Tibial artery (tissue), 4 donors: ENCODE measurements at regions of chr10 and their contacts with region 1.

Region 1: DNA sequence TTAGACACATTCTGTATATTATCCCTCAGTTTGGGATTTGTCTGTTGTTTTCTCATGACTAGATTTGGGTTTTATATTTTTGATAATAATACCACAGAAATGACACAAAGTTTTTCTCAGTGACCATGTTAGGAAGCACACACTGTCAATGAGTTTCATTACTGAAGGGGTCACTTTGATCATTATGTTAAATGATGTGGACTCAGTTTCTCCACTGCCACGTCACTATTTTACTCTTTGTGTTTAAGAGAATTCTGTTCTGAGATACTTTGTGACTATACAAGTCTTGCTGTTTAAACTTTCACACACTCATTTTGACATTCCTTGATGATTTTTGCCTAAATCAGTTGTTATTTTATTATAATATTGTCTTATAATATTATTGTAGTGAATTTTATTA is 400.9 kb upstream of the AKR1E2 start:
- DNase-seq: no peak
- H3K4me3 ChIP-seq: no peak overlapping the region
- H3K27ac ChIP-seq: no peak overlapping the region
- H3K4me1 ChIP-seq: peaks cover 0 to 10% (median 0%) of the 10 kb centered on the region in 4 donors
- H3K27me3 ChIP-seq: no peaks in the 10 kb centered on the region
- CTCF ChIP-seq: no peak

Region 2: GRCh38 chr10:3987143-3987974 is 437.7 kb before region 1 on chr10:
- intact Hi-C with region 1: no loop called
- DNase-seq: no peak
- H3K4me3 ChIP-seq: no peak overlapping the region
- H3K27ac ChIP-seq: no peak overlapping the region
- H3K4me1 ChIP-seq: no peaks in the 10 kb centered on the region
- H3K27me3 ChIP-seq: no peaks in the 10 kb centered on the region
- CTCF ChIP-seq: no peak

Region 3: GRCh38 chr10:4319870-4320367 is 105.2 kb before region 1 on chr10:
- intact Hi-C with region 1: no loop called
- DNase-seq: no peak
- H3K4me3 ChIP-seq: no peak overlapping the region
- H3K27ac ChIP-seq: no peak overlapping the region
- H3K4me1 ChIP-seq: peaks cover 0 to 27% (median 10%) of the 10 kb centered on the region in 4 donors
- H3K27me3 ChIP-seq: no peaks in the 10 kb centered on the region
- CTCF ChIP-seq: no peak

Region 4: DNA sequence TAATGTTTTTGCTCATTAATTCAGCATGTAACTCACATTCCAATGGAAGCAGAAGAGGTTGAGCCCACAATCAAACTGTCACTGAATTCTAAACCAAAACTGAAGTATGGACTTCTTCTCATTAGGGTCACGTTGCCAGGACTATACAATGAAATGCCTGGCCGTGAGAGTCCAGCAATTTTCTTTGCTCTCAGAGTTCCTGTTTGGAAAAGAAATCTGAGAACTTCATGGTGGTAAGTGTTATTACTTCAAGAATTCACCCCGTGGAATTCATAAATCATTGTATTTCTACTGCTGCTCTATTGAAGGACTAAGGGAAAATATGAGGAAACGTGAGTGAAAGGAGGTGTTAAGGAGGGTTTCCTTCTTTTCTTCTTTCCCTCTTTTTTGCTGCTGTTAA is 40.8 kb before region 1 on chr10:
- intact Hi-C with region 1: no loop called
- DNase-seq: no peak
- H3K4me3 ChIP-seq: peak overlapping the region; percentile 13 to 33
- H3K27ac ChIP-seq: peak overlapping the region; percentile 34 to 38
- H3K4me1 ChIP-seq: peaks cover 0 to 13% (median 0%) of the 10 kb centered on the region in 4 donors
- H3K27me3 ChIP-seq: no peaks in the 10 kb centered on the region
- CTCF ChIP-seq: no peak

Region 5: DNA sequence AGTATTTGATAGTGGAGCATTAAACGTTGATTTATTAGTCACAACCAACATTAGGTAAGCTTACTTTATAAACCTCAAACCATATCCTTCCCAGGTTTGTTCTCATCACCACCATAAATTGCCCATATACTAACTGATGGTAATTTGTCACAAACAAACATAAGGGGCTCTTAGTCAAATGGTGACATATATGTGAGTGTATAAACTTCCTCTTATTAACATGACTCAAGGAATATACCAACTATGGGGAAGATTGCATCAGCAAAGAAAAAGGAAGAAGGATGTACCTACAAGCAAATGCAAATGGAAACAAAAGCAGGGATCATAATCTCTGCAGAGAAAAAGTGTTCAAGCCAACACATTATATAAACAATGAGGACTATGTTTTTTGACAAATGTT is 17.3 kb before region 1 on chr10:
- intact Hi-C with region 1: no loop called
- DNase-seq: no peak
- H3K4me3 ChIP-seq: no peak overlapping the region
- H3K27ac ChIP-seq: no peak overlapping the region
- H3K4me1 ChIP-seq: peaks cover 0 to 19% (median 3%) of the 10 kb centered on the region in 4 donors
- H3K27me3 ChIP-seq: no peaks in the 10 kb centered on the region
- CTCF ChIP-seq: no peak

Region 6: GRCh38 chr10:4450956-4451908 is 26.2 kb after region 1 on chr10:
- intact Hi-C with region 1: loop called (anchors 2 kb)
- DNase-seq: no peak
- H3K4me3 ChIP-seq: no peak overlapping the region
- H3K27ac ChIP-seq: no peak overlapping the region
- H3K4me1 ChIP-seq: no peaks in the 10 kb centered on the region
- H3K27me3 ChIP-seq: no peaks in the 10 kb centered on the region
- CTCF ChIP-seq: no peak